Activated B cell treated with CpG ODN at 0.5 μM for 24 hours (primary cell): ENCODE measurements at regions of chr5 and their contacts with region 1.

Region 1: GRCh38 chr5:124583469-124584350 is 162.7 kb downstream of the ZNF608 start:
- DNase-seq: peak; percentile 23
- ATAC-seq: peak; percentile 89
- H3K4me3 Mint-ChIP-seq: peak overlapping the region; percentile 61
- H3K27ac Mint-ChIP-seq: peak overlapping the region; percentile 94
- H3K4me1 Mint-ChIP-seq: peaks cover 36% of the 10 kb centered on the region
- H3K27me3 Mint-ChIP-seq: no peaks in the 10 kb centered on the region
- CTCF ChIP-seq: no peak

Region 2: DNA sequence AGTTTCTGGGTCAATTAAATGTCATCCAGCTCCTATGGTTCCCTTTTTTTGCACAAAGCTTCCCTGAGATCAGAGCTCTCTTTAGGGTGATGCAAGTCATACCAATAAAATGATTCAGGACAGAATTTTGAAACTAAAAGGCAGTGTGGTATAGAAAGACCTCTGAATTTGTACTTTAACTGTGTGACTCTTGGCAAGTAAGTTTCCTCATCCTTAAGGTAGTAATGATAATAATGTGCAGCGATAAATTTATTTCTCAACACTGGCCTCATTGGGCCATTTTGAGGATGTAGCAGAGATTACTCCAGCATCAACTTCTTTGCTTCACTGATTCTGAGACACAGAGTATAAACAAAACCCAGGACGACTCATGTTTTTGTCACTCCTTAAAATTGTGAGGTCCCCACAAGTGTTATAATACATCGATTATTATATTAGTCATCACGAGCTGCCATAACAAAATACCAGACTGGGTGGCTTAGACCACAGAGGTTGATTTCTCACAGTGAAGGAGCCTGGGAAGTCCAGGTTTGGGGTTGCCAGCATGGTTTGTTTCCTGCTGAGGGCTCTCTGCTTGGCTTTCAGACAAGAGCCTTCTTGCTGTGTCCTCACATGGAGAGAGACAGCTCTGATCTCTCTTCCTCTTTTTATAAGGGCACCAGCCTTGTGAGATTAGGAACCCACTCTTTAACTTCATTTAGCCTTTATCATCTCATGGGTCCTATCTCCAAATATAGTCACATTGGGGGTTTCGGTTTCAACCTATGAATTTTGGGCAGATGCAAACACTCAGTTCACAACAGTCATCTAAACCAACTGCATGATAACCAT is 130.3 kb before region 1 on chr5:
- CTCF ChIA-PET with region 1: no interaction called
- POLR2A ChIA-PET with region 1: no interaction called
- intact Hi-C with region 1: loop called (anchors 1 kb)
- DNase-seq: peak; percentile 31
- ATAC-seq: peak; percentile 95
- H3K4me3 Mint-ChIP-seq: peak overlapping the region; percentile 67
- H3K27ac Mint-ChIP-seq: peak overlapping the region; percentile 79
- H3K4me1 Mint-ChIP-seq: peaks cover 43% of the 10 kb centered on the region
- H3K27me3 Mint-ChIP-seq: no peaks in the 10 kb centered on the region
- CTCF ChIP-seq: no peak

Region 3: GRCh38 chr5:124561451-124561850 is 22.3 kb before region 1 on chr5:
- CTCF ChIA-PET with region 1: no interaction called
- POLR2A ChIA-PET with region 1: no interaction called
- intact Hi-C with region 1: no loop called
- DNase-seq: no peak
- ATAC-seq: no peak
- H3K4me3 Mint-ChIP-seq: no peak overlapping the region
- H3K27ac Mint-ChIP-seq: no peak overlapping the region
- H3K4me1 Mint-ChIP-seq: no peaks in the 10 kb centered on the region
- H3K27me3 Mint-ChIP-seq: no peaks in the 10 kb centered on the region
- CTCF ChIP-seq: no peak

Region 4: DNA sequence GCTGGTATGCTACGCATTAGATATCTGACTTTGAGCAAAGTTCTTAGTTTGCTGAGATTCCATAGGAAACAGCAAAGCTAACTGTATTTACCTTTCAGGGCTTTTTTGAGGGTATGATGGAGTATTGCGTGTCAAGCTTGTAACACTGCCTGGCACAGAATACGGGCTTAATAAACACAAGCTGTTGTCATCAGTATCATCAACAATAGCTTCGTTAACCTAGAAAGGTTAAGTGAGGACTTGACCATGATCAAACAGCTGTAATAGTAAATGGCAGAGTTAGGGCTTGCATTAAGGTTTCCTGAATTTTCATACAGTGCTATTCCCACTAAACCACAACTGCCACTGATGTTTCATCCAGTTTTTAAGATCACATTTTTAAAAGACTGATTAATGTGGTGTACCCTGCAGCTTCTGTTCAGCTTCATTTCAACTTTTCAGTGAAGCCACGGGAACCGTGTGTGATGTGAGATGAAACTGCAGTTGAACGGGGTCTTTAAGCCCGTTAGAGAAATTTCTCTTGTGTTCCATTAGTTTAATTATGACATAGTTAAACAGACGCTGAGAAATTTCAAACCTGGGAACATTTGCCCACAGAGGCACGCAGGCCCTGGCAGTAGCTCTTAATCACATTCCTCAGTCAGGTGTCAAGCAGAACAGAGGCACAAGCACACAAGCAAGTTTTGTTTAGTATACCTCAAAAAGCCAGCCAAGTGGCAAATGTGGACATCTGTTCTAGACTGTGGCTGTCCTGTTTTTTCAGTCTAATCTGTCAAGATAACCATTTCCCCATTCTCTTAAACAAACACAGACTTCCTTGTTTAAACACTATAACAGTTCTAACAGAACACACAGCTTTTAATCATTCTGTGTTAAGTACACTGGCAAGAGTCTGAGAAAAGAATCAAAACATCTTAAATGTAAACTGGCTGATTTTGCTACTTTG is 15.6 kb after region 1 on chr5:
- CTCF ChIA-PET with region 1: no interaction called
- POLR2A ChIA-PET with region 1: interaction called, 6 read pairs
- intact Hi-C with region 1: loop called (anchors 1 kb)
- DNase-seq: no peak
- ATAC-seq: peak; percentile 77
- H3K4me3 Mint-ChIP-seq: peak overlapping the region; percentile 50
- H3K27ac Mint-ChIP-seq: peak overlapping the region; percentile 56
- H3K4me1 Mint-ChIP-seq: peaks cover 38% of the 10 kb centered on the region
- H3K27me3 Mint-ChIP-seq: no peaks in the 10 kb centered on the region
- CTCF ChIP-seq: no peak

Region 5: DNA sequence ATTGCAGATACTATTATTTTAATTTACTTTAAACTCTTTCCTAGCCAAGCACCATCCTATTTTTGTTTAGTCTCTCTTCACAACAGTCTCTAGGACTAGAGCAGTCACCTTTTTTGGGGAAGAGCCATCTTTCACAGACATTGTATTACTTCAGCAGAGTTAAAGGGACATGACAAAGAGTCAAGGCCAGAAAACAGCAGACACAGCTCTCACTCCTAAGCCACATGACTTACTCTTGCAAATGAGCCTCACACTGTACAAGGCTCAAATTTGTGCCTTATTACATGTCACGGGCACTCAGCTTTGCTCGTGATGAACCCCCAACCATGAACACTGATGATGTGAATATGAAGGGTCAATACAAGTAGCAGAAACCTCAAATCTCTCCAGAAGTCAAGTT is 58.4 kb after region 1 on chr5:
- CTCF ChIA-PET with region 1: no interaction called
- POLR2A ChIA-PET with region 1: interaction called, 17 read pairs
- intact Hi-C with region 1: no loop called
- DNase-seq: no peak
- ATAC-seq: no peak
- H3K4me3 Mint-ChIP-seq: no peak overlapping the region
- H3K27ac Mint-ChIP-seq: no peak overlapping the region
- H3K4me1 Mint-ChIP-seq: peaks cover 34% of the 10 kb centered on the region
- H3K27me3 Mint-ChIP-seq: no peaks in the 10 kb centered on the region
- CTCF ChIP-seq: no peak

Region 6: DNA sequence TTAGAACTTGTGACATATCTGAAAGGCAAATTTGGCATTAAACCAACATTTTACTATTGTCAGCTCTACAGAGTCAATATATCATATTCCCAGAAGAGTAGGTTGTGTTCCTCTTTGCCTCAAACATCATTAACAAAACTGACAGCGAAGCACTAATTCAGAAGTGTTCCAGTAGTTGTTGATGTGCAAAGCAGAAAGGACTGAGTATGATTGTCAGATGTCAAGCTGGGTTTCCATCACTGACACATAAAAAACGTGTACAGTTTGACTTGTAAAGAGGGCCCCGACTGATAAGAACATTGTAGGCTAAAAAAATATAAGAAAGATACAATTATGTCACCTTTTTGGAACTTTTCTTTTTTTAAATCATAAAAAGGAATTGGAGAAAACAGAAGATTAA is 264.2 kb after region 1 on chr5:
- CTCF ChIA-PET with region 1: no interaction called
- POLR2A ChIA-PET with region 1: no interaction called
- intact Hi-C with region 1: no loop called
- DNase-seq: no peak
- ATAC-seq: no peak
- H3K4me3 Mint-ChIP-seq: no peak overlapping the region
- H3K27ac Mint-ChIP-seq: no peak overlapping the region
- H3K4me1 Mint-ChIP-seq: peaks cover 24% of the 10 kb centered on the region
- H3K27me3 Mint-ChIP-seq: no peaks in the 10 kb centered on the region
- CTCF ChIP-seq: no peak